CD14-positive monocyte (primary cell): ENCODE measurements at regions of chr3 and their contacts with region 1.

Region 1: GRCh38 chr3:188683032-188683521 is 488.7 kb upstream of the TPRG1 start:
- DNase-seq: peak; percentile 14 to 70 (median 49)
- H3K4me3 ChIP-seq: no peak overlapping the region
- H3K4me3 Mint-ChIP-seq: no peak overlapping the region
- H3K27ac ChIP-seq: peak overlapping the region in 1 of 2 donors; percentile 23
- H3K27ac Mint-ChIP-seq: peak overlapping the region in 3 of 7 donors; percentile 6 to 82 (median 62)
- H3K4me1 ChIP-seq: peaks cover 38 to 58% of the 10 kb centered on the region in 2 donors
- H3K4me1 Mint-ChIP-seq: peaks cover 50% of the 10 kb centered on the region
- H3K27me3 ChIP-seq: no peaks in the 10 kb centered on the region
- H3K27me3 Mint-ChIP-seq: peaks cover 0 to 3% (median 0%) of the 10 kb centered on the region in 3 donors
- CTCF ChIP-seq: no peak

Region 2: DNA sequence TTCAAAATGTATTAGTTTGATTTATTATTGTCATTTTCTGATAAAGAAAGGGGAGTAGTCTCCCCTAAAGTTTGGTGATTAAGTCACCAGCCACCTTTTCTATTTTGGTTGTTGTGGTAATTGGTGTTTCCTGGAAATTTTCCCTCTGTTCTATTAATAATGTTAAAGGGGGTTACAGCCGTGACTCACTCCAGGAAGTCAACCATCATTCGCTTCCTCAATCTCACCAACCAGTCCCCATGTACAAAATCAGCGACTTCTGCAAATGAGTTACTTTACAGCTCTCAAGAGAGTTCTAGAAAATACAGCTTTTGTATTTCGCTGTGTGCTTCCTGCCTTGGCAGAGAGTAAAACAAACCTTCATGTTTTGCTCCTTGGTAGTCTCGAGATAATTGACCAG is 244.0 kb before region 1 on chr3:
- intact Hi-C with region 1: loop called in 1 of 2 experiments (anchors 5 kb)
- DNase-seq: peak; percentile 78 to 97 (median 93)
- H3K4me3 ChIP-seq: peak overlapping the region in 1 of 3 experiments; percentile 50
- H3K4me3 Mint-ChIP-seq: peak overlapping the region in 1 of 2 donors; percentile 48
- H3K27ac ChIP-seq: peak overlapping the region; percentile 40 to 90
- H3K27ac Mint-ChIP-seq: peak overlapping the region; percentile 86 to 96 (median 93)
- H3K4me1 ChIP-seq: peaks cover 26 to 48% of the 10 kb centered on the region in 2 donors
- H3K4me1 Mint-ChIP-seq: peaks cover 42% of the 10 kb centered on the region
- H3K27me3 ChIP-seq: no peaks in the 10 kb centered on the region
- H3K27me3 Mint-ChIP-seq: no peaks in the 10 kb centered on the region
- CTCF ChIP-seq: no peak

Region 3: GRCh38 chr3:188605231-188605630 is 77.8 kb before region 1 on chr3:
- intact Hi-C with region 1: loop called in 1 of 2 experiments (anchors 10 kb)
- DNase-seq: no peak
- H3K4me3 ChIP-seq: no peak overlapping the region
- H3K4me3 Mint-ChIP-seq: no peak overlapping the region
- H3K27ac ChIP-seq: no peak overlapping the region
- H3K27ac Mint-ChIP-seq: no peak overlapping the region
- H3K4me1 ChIP-seq: peaks cover 13 to 18% of the 10 kb centered on the region in 2 donors
- H3K4me1 Mint-ChIP-seq: peaks cover 15% of the 10 kb centered on the region
- H3K27me3 ChIP-seq: no peaks in the 10 kb centered on the region
- H3K27me3 Mint-ChIP-seq: no peaks in the 10 kb centered on the region
- CTCF ChIP-seq: no peak